Natural killer cell (primary cell): ENCODE measurements at regions of chr14 and their contacts with region 1.

Region 1: DNA sequence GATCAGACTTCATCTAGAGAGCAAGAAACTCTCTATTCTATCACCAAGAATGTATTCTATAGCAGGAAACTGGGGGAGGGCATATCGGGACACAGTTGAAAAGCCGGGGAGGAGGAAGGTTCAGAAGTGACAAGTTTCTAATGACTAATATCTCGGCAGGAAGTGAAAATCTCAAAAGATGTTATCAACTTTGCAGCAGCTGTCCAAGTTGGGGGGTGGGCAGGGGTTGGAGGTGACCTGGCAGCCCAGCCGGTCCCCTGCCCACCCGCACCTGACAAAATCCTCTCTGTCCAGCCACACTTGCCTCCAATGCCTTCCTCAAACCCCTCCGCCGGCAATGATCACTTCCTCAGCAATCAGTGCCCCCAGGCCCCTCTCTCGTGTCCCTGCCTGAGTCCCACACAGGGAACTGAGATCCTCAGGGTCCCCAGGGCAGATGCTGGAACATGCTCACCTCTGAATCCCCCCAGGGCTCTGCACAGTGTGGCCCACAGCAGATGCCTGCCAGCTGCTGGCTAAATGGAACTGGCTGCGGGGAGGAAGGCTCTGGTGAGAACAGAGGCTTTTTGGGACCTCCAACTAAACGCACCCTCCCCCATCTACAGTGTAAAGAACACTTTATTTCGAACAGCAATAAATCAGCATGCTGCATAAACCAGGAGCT is 43.9 kb downstream of the CCDC88C start:
- DNase-seq: peak; percentile 52 to 82
- ATAC-seq: peak; percentile 45 to 65 (median 46)
- H3K4me3 ChIP-seq: no peak overlapping the region
- H3K4me3 Mint-ChIP-seq: peak overlapping the region; percentile 84
- H3K27ac ChIP-seq: peak overlapping the region; percentile 86
- H3K27ac Mint-ChIP-seq: peak overlapping the region; percentile 96 to 98
- H3K4me1 ChIP-seq: peaks cover 100% of the 10 kb centered on the region
- H3K4me1 Mint-ChIP-seq: peaks cover 94 to 98% of the 10 kb centered on the region in 2 donors
- H3K27me3 ChIP-seq: no peaks in the 10 kb centered on the region
- H3K27me3 Mint-ChIP-seq: no peaks in the 10 kb centered on the region
- CTCF ChIP-seq: no peak

Region 2: DNA sequence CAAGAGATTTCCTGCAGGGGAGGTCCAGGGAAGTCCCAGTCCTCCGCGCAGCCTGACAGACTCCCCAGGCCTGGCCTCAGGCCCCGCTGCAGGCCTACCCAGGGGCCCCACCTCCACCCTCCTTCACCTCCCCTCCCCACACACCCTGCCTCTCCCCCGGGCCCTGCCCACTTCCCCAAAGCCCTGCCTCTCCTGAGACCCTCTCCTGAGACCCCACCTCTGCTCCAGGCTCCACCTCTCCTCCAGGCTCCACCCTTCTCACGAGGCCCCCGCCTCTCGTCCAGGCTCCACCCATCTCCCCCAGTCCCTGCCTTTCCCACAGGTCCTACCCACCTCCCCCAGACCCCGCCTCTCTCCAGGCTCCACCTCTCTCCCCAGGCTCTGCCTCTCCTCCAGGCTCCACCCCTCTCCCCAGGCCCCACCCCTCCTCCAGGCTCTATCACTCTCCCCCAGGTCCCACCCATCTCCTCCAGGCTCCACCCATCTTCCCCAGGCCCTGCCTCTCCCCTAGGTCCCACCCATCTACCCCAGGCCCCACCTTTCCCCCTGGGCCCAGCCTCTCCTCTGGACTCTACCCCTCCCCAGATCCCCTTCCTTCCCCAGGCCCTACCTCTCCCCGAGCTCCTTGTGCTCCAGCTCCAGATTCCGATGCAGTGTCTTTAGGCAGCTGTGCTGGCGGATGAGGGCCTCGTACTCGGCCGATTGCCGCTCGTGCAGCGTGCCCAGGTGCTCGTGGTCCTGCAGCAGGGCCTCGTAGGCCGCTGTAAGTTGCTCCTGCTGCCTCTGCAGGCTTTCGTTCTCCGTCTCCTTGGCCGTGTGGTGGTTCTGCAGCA is 70.4 kb before region 1 on chr14:
- intact Hi-C with region 1: no loop called
- DNase-seq: peak in 1 of 2 donors; percentile 65
- ATAC-seq: peak; percentile 72 to 85 (median 83)
- H3K4me3 ChIP-seq: no peak overlapping the region
- H3K4me3 Mint-ChIP-seq: no peak overlapping the region
- H3K27ac ChIP-seq: no peak overlapping the region
- H3K27ac Mint-ChIP-seq: peak overlapping the region; percentile 48 to 73
- H3K4me1 ChIP-seq: no peaks in the 10 kb centered on the region
- H3K4me1 Mint-ChIP-seq: peaks cover 17 to 18% of the 10 kb centered on the region in 2 donors
- H3K27me3 ChIP-seq: no peaks in the 10 kb centered on the region
- H3K27me3 Mint-ChIP-seq: no peaks in the 10 kb centered on the region
- CTCF ChIP-seq: no peak

Region 3: GRCh38 chr14:91323671-91324605 is 49.8 kb before region 1 on chr14:
- intact Hi-C with region 1: loop called (anchors 2 kb)
- DNase-seq: peak; percentile 95
- ATAC-seq: peak; percentile 76 to 94 (median 82)
- H3K4me3 ChIP-seq: peak overlapping the region; percentile 11
- H3K4me3 Mint-ChIP-seq: peak overlapping the region; percentile 94
- H3K27ac ChIP-seq: peak overlapping the region; percentile 94
- H3K27ac Mint-ChIP-seq: peak overlapping the region; percentile 100
- H3K4me1 ChIP-seq: peaks cover 67% of the 10 kb centered on the region
- H3K4me1 Mint-ChIP-seq: peaks cover 48 to 59% of the 10 kb centered on the region in 2 donors
- H3K27me3 ChIP-seq: no peaks in the 10 kb centered on the region
- H3K27me3 Mint-ChIP-seq: no peaks in the 10 kb centered on the region
- CTCF ChIP-seq: peak; percentile 93

Region 4: DNA sequence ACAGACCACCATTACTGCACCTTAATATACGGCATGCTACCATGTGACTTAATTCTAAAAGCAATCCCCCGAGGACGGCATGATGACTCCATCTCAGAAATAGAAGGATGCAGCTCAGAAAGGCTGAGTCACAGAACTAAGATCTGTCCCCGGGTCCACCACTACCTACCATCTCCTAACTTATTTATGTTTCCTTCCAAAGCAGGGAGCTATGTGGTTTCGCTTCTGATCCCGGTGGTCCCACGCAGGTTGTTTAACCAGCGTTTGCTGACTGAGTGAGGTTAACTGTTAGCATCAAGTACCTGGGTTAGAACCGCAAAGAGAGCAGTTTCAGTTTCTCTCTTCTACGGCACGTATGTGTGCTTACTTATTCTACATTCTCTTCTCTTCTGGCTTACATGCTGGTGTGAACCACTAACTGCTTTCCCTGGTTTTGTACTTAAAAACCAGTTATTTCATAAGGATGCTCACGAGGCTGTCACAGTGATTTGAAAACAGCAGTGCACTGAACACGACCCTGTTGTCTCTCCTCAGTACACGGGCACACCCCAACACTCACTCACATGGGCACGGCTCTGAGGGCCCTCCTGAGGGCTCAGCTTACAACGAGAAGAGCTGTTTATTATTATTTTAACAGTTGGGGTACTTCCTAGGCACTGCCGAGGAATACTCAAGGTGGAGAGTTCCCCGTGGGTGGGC is 22.8 kb before region 1 on chr14:
- intact Hi-C with region 1: loop called (anchors 1 kb)
- DNase-seq: peak; percentile 46 to 87
- ATAC-seq: peak; percentile 54 to 75 (median 72)
- H3K4me3 ChIP-seq: peak overlapping the region; percentile 6
- H3K4me3 Mint-ChIP-seq: peak overlapping the region; percentile 90
- H3K27ac ChIP-seq: peak overlapping the region; percentile 86
- H3K27ac Mint-ChIP-seq: peak overlapping the region; percentile 96 to 97
- H3K4me1 ChIP-seq: peaks cover 92% of the 10 kb centered on the region
- H3K4me1 Mint-ChIP-seq: peaks cover 89 to 94% of the 10 kb centered on the region in 2 donors
- H3K27me3 ChIP-seq: no peaks in the 10 kb centered on the region
- H3K27me3 Mint-ChIP-seq: no peaks in the 10 kb centered on the region
- CTCF ChIP-seq: no peak

Region 5: GRCh38 chr14:91388551-91388975 is 14.8 kb after region 1 on chr14:
- intact Hi-C with region 1: loop called (anchors 1 kb)
- DNase-seq: peak in 1 of 2 donors; percentile 78
- ATAC-seq: peak; percentile 46 to 71 (median 46)
- H3K4me3 ChIP-seq: no peak overlapping the region
- H3K4me3 Mint-ChIP-seq: peak overlapping the region; percentile 43
- H3K27ac ChIP-seq: peak overlapping the region; percentile 64
- H3K27ac Mint-ChIP-seq: peak overlapping the region; percentile 96 to 98
- H3K4me1 ChIP-seq: peaks cover 98% of the 10 kb centered on the region
- H3K4me1 Mint-ChIP-seq: peaks cover 76 to 88% of the 10 kb centered on the region in 2 donors
- H3K27me3 ChIP-seq: no peaks in the 10 kb centered on the region
- H3K27me3 Mint-ChIP-seq: no peaks in the 10 kb centered on the region
- CTCF ChIP-seq: no peak

Region 6: GRCh38 chr14:91396959-91397815 is 23.5 kb after region 1 on chr14:
- intact Hi-C with region 1: loop called (anchors 2 kb)
- DNase-seq: peak in 1 of 2 donors; percentile 76
- ATAC-seq: peak; percentile 38 to 65 (median 41)
- H3K4me3 ChIP-seq: peak overlapping the region; percentile 15
- H3K4me3 Mint-ChIP-seq: peak overlapping the region; percentile 79
- H3K27ac ChIP-seq: peak overlapping the region; percentile 82
- H3K27ac Mint-ChIP-seq: peak overlapping the region; percentile 96 to 98
- H3K4me1 ChIP-seq: peaks cover 95% of the 10 kb centered on the region
- H3K4me1 Mint-ChIP-seq: peaks cover 90 to 94% of the 10 kb centered on the region in 2 donors
- H3K27me3 ChIP-seq: no peaks in the 10 kb centered on the region
- H3K27me3 Mint-ChIP-seq: no peaks in the 10 kb centered on the region
- CTCF ChIP-seq: no peak

Region 7: DNA sequence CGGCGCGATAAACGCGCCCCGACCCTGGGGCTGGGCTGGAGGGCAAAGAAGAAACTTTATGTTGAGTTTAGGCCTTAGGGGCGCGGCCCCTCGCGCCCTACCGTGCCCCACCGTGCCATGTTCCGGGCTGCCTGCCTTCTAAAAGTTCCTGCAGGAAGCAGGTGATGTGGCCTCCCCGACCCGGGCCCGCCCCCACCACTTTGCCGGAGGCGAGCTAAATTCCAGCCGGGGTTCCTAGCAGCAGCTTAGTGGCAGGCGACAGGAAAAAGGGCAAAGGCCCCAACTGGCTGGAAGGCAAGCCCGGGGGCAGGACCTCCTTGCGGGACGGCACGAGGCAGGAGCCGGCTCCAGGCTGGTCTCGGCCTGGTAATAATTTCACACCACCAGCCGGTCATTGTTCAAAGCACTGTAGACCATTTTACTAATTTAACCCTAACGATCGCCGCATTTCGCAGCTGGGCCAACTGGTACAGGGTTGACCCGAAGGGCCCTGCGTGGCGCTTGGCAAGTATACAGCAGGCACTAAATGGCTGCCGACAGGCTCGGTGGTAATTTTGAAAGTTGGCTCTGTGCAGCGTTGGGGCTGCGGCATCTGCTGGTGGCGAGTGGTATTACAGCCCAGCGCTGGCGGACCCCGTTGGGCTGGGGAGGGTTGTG is 44.8 kb after region 1 on chr14:
- intact Hi-C with region 1: loop called (anchors 1 kb)
- DNase-seq: peak; percentile 81 to 92
- ATAC-seq: peak; percentile 32 to 61 (median 36)
- H3K4me3 ChIP-seq: peak overlapping the region; percentile 27
- H3K4me3 Mint-ChIP-seq: peak overlapping the region; percentile 55
- H3K27ac ChIP-seq: peak overlapping the region; percentile 70
- H3K27ac Mint-ChIP-seq: peak overlapping the region; percentile 80 to 99
- H3K4me1 ChIP-seq: peaks cover 37% of the 10 kb centered on the region
- H3K4me1 Mint-ChIP-seq: peaks cover 39 to 45% of the 10 kb centered on the region in 2 donors
- H3K27me3 ChIP-seq: no peaks in the 10 kb centered on the region
- H3K27me3 Mint-ChIP-seq: no peaks in the 10 kb centered on the region
- CTCF ChIP-seq: peak; percentile 98

Region 8: GRCh38 chr14:91493169-91493568 is 119.4 kb after region 1 on chr14:
- intact Hi-C with region 1: no loop called
- DNase-seq: no peak
- ATAC-seq: no peak
- H3K4me3 ChIP-seq: no peak overlapping the region
- H3K4me3 Mint-ChIP-seq: peak overlapping the region; percentile 2
- H3K27ac ChIP-seq: no peak overlapping the region
- H3K27ac Mint-ChIP-seq: peak overlapping the region in 1 of 2 donors; percentile 74
- H3K4me1 ChIP-seq: peaks cover 42% of the 10 kb centered on the region
- H3K4me1 Mint-ChIP-seq: peaks cover 63 to 74% of the 10 kb centered on the region in 2 donors
- H3K27me3 ChIP-seq: no peaks in the 10 kb centered on the region
- H3K27me3 Mint-ChIP-seq: no peaks in the 10 kb centered on the region
- CTCF ChIP-seq: no peak